Activated T-helper 2 cell treated with anti-CD3 and anti-CD28 coated beads, Interferon-gamma antibody, Interleukin-2, Interleukin-4, amounts not matched to agents 10 μg/mL and 5 μg/mL and 100 μg/mL, durations not matched to agents 14 hours and 24 hours and 36 hours (primary cell): ENCODE measurements at regions of chr5 and their contacts with region 1.

Region 1: DNA sequence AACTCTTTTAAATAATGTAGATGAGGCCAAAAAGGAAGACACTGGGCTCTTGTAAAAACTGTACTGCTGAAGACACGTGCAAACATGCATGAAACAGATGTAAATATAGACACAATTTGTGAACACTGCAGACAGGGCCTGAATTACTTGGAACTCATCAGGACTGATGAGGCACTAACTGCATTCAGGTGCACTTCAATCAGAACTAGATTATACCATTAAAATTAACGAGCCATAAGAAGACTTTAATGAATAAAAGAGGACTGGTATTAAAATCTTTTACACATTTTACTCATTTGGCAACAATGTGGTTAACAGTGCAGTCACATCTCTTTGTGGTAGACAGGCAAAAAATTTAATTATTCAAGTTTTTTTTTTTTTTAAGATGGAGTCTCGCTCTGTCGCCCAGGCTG is 13.4 kb upstream of the ZCCHC9 start:
- DNase-seq: no peak
- H3K4me3 Mint-ChIP-seq: no peak overlapping the region
- H3K27ac Mint-ChIP-seq: no peak overlapping the region
- H3K4me1 Mint-ChIP-seq: peaks cover 51% of the 10 kb centered on the region
- H3K27me3 Mint-ChIP-seq: peaks cover 2% of the 10 kb centered on the region

Region 2: DNA sequence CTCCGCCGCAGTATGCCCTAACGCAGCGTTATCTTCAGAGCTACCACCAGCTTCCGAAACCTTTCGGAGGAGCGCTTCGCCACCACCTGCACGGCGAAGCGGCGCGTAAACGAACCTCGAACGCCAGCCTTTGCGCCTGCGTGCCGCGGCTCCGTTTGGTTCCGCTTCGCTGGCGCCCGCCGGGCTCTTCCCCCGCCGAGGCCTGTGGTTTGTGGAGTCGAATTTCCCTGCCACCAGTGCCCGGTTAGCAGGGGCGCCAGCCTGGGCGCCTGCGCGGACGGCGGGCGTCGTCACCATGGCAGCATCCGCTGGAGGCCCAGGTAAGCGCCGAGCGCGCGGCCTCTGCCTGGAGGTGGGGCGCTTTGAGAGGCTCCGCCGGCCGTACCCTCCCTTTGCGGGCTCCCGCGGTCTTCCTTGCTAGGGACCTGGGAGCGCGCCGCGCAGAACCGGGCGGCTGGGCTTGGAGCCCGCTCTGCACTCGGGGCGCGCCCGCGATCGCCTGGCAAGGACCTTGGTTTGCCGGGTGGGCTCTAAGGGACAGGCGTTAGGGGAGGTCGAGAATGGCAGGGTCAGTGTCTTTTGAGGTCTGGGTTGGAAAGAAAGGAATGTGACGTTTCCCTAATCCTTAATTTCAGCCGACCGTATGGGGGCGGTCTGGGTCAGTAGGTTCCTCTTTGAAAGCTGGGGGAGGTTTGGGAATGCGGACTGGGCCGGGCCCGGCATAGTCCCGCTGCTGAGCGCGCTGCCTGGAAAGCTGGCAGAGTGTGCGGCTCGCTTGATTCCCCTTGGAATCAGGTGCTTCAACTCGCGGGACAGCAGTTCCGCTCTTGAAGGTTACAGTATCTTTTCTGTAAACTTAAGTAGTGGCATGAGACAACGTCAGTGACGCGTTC is 800.0 kb before region 1 on chr5 and contains the start of gene FAM151B:
- intact Hi-C with region 1: loop called (anchors 10 kb)
- DNase-seq: peak; percentile 71
- H3K4me3 Mint-ChIP-seq: peak within 1 kb of the TSS; percentile 83
- H3K27ac Mint-ChIP-seq: no peak within 1 kb of the TSS
- H3K4me1 Mint-ChIP-seq: peaks cover 19% of the 10 kb centered on the region
- H3K27me3 Mint-ChIP-seq: peaks cover 24% of the 10 kb centered on the region
- total RNA-seq, gene FAM151B: 0.43 and 0.76 TPM in 2 replicates

Region 3: DNA sequence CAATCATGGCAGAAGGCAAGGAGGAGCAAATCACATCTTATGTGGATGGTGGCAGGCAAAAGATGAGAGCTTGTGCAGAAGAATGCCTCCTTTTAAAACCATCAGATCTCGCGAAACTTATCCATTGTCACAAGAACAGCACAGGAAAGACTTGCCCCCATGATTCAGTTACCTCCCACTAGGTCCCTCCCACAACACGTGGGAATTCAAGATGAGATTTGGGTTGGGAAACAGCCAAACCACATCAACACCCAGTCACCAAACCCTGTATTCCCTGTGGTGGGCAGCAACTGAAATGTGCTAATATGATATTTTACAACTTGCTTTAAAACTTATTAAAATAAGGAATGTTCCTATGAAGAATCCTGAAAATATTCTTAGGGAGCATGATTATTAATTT is 273.7 kb before region 1 on chr5:
- intact Hi-C with region 1: loop called (anchors 10 kb)
- DNase-seq: no peak
- H3K4me3 Mint-ChIP-seq: no peak overlapping the region
- H3K27ac Mint-ChIP-seq: no peak overlapping the region
- H3K4me1 Mint-ChIP-seq: peaks cover 45% of the 10 kb centered on the region
- H3K27me3 Mint-ChIP-seq: no peaks in the 10 kb centered on the region

Region 4: DNA sequence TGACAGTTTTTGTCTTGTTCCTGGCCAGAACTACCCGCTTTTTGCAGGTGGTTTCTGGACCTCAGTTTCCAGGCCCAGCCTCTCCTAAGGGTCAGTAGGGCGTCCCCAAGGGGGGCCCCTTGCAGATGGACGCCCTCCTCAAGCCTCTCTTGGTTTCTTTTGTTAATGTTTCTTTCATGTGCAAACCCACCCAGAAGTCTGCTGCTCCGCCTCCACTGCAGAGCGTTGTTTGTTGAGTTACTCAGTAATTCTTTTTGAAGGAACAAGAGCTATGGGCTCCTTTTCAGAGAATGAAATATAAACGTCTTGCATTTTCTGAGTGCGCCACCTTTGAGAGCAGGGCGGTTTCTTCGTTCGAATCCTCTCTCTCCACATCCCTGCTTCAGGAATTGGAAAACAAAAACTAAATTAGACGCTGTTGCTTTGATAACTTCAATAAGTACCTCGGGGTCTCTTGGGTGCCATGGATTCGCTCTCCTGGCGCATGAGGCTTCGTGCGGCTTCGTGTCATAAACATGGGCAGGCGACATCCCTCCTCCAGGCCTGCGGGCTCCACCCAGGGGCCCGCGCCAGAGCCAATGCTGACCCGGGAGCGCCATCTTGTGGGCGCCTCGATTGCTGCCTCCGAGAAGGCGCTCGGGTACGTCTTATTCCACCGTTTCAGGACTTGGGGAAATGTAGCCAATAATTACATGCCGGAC is 93.2 kb before region 1 on chr5:
- intact Hi-C with region 1: loop called (anchors 10 kb)
- DNase-seq: peak; percentile 73
- H3K4me3 Mint-ChIP-seq: no peak overlapping the region
- H3K27ac Mint-ChIP-seq: no peak overlapping the region
- H3K4me1 Mint-ChIP-seq: peaks cover 6% of the 10 kb centered on the region
- H3K27me3 Mint-ChIP-seq: no peaks in the 10 kb centered on the region

Region 5: DNA sequence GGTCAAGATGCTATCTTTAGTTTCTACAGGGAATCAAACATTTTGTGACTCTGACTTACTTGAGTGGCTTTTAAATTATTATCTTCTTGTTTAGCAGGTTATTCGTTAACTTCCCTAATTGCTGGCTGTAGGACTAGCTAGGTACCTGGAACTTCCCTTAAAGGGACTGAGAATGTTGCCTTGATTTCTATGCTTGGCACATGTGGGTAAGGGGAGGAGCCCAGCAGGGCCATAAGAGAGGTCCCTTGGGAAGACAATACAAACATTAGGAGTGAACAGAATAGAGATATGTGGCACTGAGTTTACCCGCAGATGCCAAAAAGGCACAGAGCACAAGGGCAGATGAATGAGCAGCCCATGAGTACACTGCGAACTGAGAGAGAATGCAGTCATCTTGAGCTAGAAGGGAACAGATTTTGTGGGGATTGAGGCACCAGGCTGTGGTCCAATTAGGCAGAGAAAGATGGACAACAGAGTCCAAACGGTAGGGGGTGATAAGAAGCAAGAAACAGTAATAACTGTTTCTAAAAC is 45.1 kb before region 1 on chr5:
- intact Hi-C with region 1: loop called (anchors 2 kb)
- DNase-seq: no peak
- H3K4me3 Mint-ChIP-seq: no peak overlapping the region
- H3K27ac Mint-ChIP-seq: no peak overlapping the region
- H3K4me1 Mint-ChIP-seq: peaks cover 6% of the 10 kb centered on the region
- H3K27me3 Mint-ChIP-seq: no peaks in the 10 kb centered on the region

Region 6: GRCh38 chr5:81393430-81393782 is 105.4 kb after region 1 on chr5:
- intact Hi-C with region 1: no loop called
- DNase-seq: no peak
- H3K4me3 Mint-ChIP-seq: peak overlapping the region; percentile 32
- H3K27ac Mint-ChIP-seq: no peak overlapping the region
- H3K4me1 Mint-ChIP-seq: peaks cover 8% of the 10 kb centered on the region
- H3K27me3 Mint-ChIP-seq: peaks cover 46% of the 10 kb centered on the region